GM23248 (cell line): ENCODE measurements at regions of chr5 and their contacts with region 1.

Region 1: DNA sequence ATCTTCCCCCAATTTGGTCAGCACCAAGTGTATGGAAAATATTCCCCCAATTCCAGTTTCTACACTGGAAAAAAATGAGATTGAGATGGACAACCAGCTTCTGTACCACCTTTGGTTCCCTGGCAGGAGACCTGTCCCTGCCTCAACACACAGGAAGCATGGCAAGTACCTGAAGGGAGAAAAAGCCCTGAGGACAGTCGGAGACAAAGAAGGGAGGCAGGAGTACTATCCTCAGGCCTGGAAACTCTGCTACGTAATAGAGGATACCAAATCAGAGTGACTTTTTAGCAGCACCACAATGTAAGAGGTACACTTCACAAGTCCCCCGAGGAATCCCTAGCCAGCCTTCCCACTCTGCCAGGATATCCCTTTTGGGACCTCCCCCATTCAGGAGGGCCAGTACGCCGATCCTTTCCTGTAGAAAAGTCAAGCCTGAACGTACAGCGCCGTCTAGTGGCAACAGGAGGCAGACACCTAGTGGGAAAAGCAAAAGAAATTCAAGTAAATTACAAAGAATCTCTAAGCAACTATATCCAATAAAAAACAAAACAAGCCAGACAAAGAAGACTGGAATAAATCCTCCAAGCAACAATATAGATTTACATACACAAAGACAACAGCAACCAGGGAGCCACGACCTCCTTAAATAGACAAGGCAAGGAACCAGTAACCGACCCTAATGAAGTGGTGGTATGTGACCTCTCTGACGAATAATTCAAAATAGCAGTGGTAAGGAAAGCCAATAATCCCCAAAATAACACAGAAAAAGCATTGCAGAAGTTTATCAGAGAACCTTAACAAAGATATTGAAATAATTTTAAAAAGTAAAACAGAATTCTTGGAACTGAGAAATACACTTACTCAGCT is 63.3 kb upstream of the SLCO6A1 start:
- DNase-seq: peak; percentile 48
- H3K4me3 ChIP-seq: no peak overlapping the region
- H3K27ac ChIP-seq: no peak overlapping the region
- H3K4me1 ChIP-seq: peaks cover 3% of the 10 kb centered on the region; the same call in 1 of the 2 replicates
- H3K27me3 ChIP-seq: no peaks in the 10 kb centered on the region; the same call in 1 of the 2 replicates

Region 2: DNA sequence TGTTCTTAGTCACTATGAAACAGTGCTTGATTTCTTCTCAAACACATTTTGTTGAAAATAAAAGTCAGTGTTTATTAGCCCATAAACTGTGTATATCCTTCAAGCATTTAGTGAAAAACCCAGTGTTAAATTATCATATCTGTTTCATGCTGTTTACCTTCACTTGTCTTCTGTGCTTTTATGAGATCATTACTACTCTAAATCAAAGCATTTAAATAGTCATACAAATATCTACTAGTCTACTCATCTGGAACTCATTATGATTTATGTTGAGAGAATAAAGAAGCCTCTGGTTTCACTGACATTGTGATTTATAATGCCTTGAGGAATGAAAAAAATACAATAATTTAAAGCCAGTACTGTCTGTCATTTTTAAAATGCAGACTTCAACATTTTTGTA is 632.5 kb before region 1 on chr5:
- in situ Hi-C with region 1: no loop called
- DNase-seq: no peak
- H3K4me3 ChIP-seq: no peak overlapping the region
- H3K27ac ChIP-seq: no peak overlapping the region
- H3K4me1 ChIP-seq: no peaks in the 10 kb centered on the region
- H3K27me3 ChIP-seq: no peaks in the 10 kb centered on the region

Region 3: GRCh38 chr5:102747386-102748166 is 185.4 kb after region 1 on chr5:
- in situ Hi-C with region 1: no loop called
- DNase-seq: no peak
- H3K4me3 ChIP-seq: no peak overlapping the region
- H3K27ac ChIP-seq: no peak overlapping the region
- H3K4me1 ChIP-seq: no peaks in the 10 kb centered on the region
- H3K27me3 ChIP-seq: no peaks in the 10 kb centered on the region

Region 4: DNA sequence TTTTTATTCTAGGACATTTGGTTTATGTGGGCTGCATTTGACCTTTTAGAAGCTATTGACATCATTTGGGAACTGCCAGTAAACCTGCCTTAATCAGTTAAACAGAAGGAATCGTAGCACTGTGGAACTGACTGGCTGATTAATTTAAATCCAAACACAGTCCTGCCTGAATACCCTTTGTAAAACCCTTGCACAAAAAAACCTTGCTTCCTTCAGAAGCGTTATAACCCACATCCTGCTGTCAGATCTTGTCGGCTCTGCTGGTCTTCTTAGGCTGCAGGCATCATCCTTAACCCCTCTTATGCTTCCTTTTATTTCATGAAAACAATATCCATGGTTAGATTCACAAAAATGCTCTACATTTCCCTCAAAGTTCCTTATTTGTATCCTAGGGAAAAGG is 239.2 kb after region 1 on chr5:
- in situ Hi-C with region 1: no loop called
- DNase-seq: no peak
- H3K4me3 ChIP-seq: no peak overlapping the region
- H3K27ac ChIP-seq: no peak overlapping the region
- H3K4me1 ChIP-seq: peaks cover 18% of the 10 kb centered on the region
- H3K27me3 ChIP-seq: no peaks in the 10 kb centered on the region

Region 5: GRCh38 chr5:102911973-102912372 is 349.8 kb after region 1 on chr5:
- in situ Hi-C with region 1: no loop called
- DNase-seq: peak; percentile 76
- H3K4me3 ChIP-seq: no peak overlapping the region
- H3K27ac ChIP-seq: peak overlapping the region; percentile 45; the same call in 1 of the 2 replicates
- H3K4me1 ChIP-seq: peaks cover 44% of the 10 kb centered on the region
- H3K27me3 ChIP-seq: no peaks in the 10 kb centered on the region

Region 6: GRCh38 chr5:103041071-103041676 is 479.0 kb after region 1 on chr5:
- in situ Hi-C with region 1: loop called (anchors 10 kb)
- DNase-seq: peak; percentile 62
- H3K4me3 ChIP-seq: no peak overlapping the region
- H3K27ac ChIP-seq: no peak overlapping the region
- H3K4me1 ChIP-seq: peaks cover 7% of the 10 kb centered on the region; the same call in 1 of the 2 replicates
- H3K27me3 ChIP-seq: no peaks in the 10 kb centered on the region